Dendritic cell treated with granulocyte-macrophage colony-stimulating factor and Interleukin-4, amounts not matched to agents 40 ng/mL and 50 ng/mL, for 4 days (primary cell): ENCODE measurements at regions of chr7 and their contacts with region 1.

Region 1: DNA sequence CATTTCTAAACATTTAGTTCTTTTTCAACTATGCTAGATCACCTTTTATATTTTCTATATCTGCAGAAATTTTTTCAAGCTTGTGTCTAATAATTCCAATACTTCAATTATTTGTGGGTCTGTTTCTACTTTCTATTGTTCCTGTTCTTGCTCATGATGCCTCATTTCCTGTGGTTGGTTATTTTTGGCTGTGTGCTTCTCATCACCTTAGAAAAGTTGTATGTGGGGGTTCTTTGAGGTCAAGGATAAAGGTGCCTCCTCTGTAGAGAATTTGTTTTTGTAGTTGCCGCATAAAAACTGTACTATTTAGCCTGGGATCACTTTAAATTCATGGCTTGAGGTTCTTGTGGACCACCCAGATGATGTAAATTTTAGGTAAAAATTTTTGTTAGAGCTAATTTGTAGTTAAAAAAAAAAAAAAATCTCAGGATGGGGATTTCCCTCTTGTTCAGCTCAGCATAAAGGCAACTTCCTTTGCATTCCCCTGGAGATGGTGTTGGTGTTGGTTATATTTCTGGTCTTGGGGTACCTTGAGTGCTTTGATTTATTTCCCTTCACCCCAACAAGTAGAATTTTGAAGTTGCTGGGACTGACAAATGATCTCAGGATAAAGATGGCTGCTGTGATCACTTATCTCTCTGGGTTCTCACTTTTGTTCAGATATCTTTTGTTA is 27.0 kb upstream of the JAZF1 start:
- H3K4me3 Mint-ChIP-seq: no peak overlapping the region
- H3K27ac Mint-ChIP-seq: no peak overlapping the region
- H3K4me1 Mint-ChIP-seq: peaks cover 14% of the 10 kb centered on the region
- H3K27me3 Mint-ChIP-seq: no peaks in the 10 kb centered on the region

Region 2: DNA sequence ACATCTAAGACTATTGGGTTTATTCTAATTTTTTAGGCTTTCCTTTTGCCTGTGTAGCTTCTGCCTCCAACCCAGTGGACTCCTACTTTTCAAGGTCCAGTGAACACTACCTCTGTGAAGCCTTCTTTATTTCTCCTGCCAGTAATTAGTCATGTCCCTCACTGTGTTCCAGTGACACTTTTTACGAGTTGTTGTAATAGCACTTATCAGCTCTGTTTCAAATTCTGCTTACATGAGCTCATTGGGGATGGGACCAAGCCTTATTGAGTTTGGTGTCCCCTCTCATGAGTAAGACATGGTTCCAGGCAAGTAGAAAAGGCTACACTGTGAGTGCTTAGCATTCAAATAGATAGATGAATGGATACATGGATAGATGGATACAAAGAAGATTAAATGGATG is 729.5 kb before region 1 on chr7:
- intact Hi-C with region 1: no loop called
- H3K4me3 Mint-ChIP-seq: no peak overlapping the region
- H3K27ac Mint-ChIP-seq: no peak overlapping the region
- H3K4me1 Mint-ChIP-seq: no peaks in the 10 kb centered on the region
- H3K27me3 Mint-ChIP-seq: peaks cover 14% of the 10 kb centered on the region

Region 3: DNA sequence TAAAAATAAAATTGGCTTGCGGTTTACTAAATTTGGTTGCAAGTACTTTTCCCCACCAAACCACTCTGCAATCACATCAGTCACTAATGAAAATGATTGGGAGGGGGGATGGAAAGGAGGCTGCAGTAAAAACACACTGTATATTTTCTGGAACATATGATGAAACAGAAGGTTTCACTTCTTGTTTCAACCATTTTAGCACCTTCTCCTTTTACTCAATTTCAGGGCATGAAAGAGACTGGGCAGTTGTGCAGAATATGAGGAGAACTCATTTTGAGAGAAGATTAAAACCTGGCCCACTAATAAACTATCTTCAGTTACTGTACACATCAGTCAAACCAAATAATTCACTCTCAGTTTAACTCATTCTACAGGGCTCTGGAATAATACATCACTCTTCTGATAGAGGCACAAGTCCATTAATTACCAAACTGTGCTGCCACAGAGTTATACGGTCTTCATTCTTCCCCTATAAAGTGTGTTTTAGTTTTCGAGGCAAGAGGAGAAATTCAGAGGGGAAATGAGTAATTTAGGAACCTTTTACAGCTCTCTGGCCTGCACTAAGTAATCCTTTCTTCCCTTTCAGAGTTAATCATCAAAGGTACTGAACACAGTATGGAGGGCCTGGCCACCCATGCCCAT is 52.5 kb before region 1 on chr7:
- intact Hi-C with region 1: no loop called
- H3K4me3 Mint-ChIP-seq: peak overlapping the region; percentile 34
- H3K27ac Mint-ChIP-seq: peak overlapping the region; percentile 88
- H3K4me1 Mint-ChIP-seq: peaks cover 68% of the 10 kb centered on the region
- H3K27me3 Mint-ChIP-seq: no peaks in the 10 kb centered on the region

Region 4: DNA sequence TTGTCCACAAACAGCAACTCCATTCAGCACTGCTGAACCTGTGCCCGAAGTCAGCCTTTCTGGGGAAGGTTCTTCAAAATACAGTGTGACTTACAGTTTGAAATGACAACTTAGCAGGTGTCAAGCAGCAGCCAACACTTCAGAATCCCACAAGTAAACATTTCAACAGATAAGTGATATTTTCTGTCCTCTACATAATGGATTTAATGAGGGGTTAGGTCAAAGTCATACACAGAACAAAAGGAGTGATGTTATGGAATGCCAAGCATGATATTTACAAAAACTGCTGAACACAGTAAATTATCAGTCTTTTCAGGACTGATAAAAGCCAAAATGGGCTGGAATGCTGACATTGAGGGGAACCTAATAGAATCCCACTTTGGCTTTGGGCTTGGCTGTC is 50.6 kb after region 1 on chr7:
- intact Hi-C with region 1: loop called (anchors 5 kb)
- H3K4me3 Mint-ChIP-seq: no peak overlapping the region
- H3K27ac Mint-ChIP-seq: no peak overlapping the region
- H3K4me1 Mint-ChIP-seq: peaks cover 6% of the 10 kb centered on the region
- H3K27me3 Mint-ChIP-seq: no peaks in the 10 kb centered on the region

Region 5: GRCh38 chr7:28481091-28481926 is 273.7 kb after region 1 on chr7:
- intact Hi-C with region 1: no loop called
- H3K4me3 Mint-ChIP-seq: no peak overlapping the region
- H3K27ac Mint-ChIP-seq: no peak overlapping the region
- H3K4me1 Mint-ChIP-seq: peaks cover 17% of the 10 kb centered on the region
- H3K27me3 Mint-ChIP-seq: peaks cover 6% of the 10 kb centered on the region

Region 6: GRCh38 chr7:28890137-28890536 is 682.5 kb after region 1 on chr7:
- intact Hi-C with region 1: no loop called
- H3K4me3 Mint-ChIP-seq: no peak overlapping the region
- H3K27ac Mint-ChIP-seq: no peak overlapping the region
- H3K4me1 Mint-ChIP-seq: no peaks in the 10 kb centered on the region
- H3K27me3 Mint-ChIP-seq: peaks cover 30% of the 10 kb centered on the region